ENCODE measurements at regions of chr11 and their contacts with region 1.

Region 1: DNA sequence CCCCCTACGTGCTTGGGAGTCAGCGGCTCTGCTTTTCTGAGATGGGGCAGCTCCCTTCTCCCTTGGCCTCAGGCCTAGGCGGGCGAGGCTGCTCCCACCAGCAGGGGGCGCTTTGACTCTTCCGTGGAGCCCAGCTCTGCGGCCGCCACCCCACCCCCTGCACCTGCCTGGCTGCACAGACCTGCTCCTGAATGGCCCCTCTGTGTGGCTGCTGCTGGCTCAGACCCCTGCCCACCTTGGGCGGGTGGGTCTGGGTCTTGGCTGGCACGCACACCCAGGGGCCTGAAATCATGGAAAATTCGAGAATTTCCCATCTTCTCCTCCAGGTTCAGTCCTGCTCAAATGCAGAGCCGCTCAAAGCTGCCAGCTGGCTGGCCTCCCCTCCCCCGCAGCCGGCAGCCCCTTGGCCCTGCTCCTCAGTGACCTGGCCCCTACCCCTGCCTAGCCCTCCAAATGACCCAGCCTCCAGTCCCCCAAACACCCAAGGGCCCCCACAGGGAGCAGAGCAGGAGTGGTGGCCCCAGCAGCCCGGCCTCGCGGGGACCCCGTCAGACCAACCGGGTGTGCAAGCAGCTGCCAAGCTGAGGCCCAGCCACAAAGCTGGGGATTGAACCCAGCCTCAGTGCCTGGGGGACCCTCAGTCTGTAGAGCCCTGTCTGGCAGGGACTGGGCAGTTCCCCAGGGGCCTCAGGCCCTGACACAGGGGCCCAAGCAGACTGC is 9.0 kb downstream of the PRR33 start:
- DNase-seq: peak; percentile 86
- ATAC-seq: peak; percentile 79 to 87

Region 2: GRCh38 chr11:1837171-1838076 is 45.3 kb before region 1 on chr11:
- intact Hi-C with region 1: loop called in 1 of 2 experiments (anchors 5 kb)
- DNase-seq: peak; percentile 70
- ATAC-seq: peak; percentile 52 to 69

Measured in left cardiac atrium (tissue), 4 donors.